Activated CD4-positive, alpha-beta T cell treated with anti-CD3 and anti-CD28 coated beads for 36 hours (primary cell): ENCODE measurements at regions of chr11 and their contacts with region 1.

Region 1: GRCh38 chr11:131748151-131749050 is 378.0 kb downstream of the NTM start:
- DNase-seq: peak; percentile 67
- ATAC-seq: no peak
- H3K4me3 Mint-ChIP-seq: no peak overlapping the region
- H3K27ac Mint-ChIP-seq: no peak overlapping the region
- H3K4me1 Mint-ChIP-seq: no peaks in the 10 kb centered on the region
- H3K27me3 Mint-ChIP-seq: peaks cover 10% of the 10 kb centered on the region

Region 2: DNA sequence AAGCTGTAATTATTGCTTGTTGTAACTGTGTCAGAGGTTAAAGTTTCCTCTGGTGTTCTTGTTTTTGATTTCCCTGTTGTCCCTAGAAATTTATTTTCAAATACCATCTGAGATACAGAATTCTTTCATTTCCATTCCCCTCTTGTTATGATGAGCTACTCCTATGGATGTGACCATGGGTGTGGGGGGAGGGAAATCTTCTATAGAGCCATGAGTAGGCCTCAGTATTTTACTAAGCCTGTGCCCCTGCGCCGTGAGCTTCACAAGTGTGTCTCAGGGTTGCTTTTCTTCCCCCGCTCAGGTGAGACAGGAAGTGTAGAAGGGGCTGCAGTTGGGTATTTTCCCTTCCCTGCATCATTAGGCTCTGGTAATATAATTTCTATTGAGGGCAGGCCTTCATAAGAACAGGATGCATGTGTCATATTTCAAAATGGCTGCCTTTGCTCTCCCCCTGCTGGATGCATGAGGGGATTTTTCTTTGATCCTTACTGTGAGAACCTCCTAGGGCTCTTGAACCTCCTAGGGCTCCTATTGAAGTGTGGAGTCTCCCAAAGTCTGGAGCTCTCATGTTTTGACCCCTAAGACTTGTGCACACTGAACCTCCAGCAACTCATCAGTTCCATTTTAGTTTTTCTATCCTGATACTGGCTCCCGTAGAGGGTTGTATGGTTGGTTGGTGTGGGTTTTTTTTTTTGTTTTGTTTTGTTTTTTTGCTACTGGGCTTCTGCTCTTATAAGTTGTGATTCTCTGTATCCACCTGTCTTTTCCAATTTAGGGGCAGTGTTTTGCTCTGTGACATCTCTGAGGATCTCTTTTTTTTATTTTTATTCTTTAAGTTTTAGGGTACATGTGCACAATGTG is 280.2 kb after region 1 on chr11:
- CTCF ChIA-PET with region 1: no interaction called
- POLR2A ChIA-PET with region 1: no interaction called
- intact Hi-C with region 1: loop called (anchors 1 to 5 kb)
- DNase-seq: peak; percentile 26
- ATAC-seq: no peak
- H3K4me3 Mint-ChIP-seq: no peak overlapping the region
- H3K27ac Mint-ChIP-seq: no peak overlapping the region
- H3K4me1 Mint-ChIP-seq: no peaks in the 10 kb centered on the region
- H3K27me3 Mint-ChIP-seq: no peaks in the 10 kb centered on the region

Region 3: DNA sequence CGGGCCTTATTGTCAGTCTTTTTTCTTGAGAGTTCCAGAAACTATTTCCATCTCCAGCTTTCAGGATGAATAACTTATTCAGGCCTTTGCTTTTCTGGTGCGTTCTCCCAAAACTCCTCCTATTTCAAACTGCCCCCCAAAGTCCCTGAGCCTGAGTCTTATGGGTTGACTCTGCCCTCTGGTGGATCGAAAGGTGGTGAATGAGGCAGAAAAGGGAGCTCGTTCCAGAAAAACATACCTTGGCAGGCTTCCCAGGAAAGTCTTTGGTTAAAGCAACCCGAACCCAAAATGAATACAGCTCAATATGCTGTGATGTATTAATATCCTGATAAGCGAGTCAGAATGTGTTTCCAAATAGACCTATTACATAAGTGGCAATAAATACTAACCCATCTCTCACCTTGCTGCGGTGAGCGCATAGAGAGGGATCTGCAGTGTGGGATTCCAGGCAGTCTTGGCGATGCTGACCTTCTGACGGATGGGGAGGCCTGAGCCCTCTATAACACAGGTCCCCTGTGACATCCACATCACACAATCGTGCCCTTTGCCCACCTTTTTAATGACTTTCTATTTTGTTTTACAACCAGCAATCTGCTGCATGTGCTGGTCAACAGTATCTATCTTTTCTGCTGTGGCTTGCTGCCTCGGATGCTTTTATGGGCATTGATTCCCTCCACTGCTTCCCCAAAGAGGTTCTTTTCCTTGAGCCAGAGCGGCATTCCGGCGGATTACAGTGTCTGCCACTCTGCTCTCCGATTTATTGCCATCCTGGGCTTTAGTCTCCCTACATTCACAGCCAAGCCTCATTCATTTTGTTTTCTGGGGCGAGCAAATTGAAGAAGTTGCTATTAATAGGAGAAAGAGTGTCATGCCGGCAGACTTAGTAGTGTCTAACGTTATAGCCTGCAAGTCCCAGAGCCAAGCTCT is 378.8 kb after region 1 on chr11:
- CTCF ChIA-PET with region 1: interaction called, 5 read pairs
- POLR2A ChIA-PET with region 1: no interaction called
- intact Hi-C with region 1: loop called in 1 of 2 experiments (anchors 2 kb)
- DNase-seq: no peak
- ATAC-seq: no peak
- H3K4me3 Mint-ChIP-seq: no peak overlapping the region
- H3K27ac Mint-ChIP-seq: no peak overlapping the region
- H3K4me1 Mint-ChIP-seq: no peaks in the 10 kb centered on the region
- H3K27me3 Mint-ChIP-seq: peaks cover 2% of the 10 kb centered on the region

Region 4: DNA sequence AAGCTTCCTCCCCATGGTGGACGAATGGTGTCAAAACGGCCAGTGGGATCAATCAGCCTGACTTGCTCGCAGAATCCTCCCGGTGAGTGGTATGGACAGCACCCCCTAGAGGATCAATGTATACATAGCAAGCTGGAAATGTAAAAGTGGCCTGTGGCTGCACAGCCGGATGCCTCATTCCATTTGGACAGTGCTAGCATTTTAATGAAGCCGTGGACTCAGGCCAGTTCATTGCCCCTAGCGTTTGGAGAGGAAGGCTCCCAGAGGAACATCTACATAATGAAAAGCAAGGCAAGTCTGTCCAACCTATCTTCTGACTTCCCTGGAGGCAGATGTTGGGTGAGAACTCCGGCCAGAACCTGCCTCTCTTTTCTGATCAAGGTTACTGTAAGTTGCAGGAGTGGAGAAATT is 564.3 kb after region 1 on chr11:
- CTCF ChIA-PET with region 1: no interaction called
- POLR2A ChIA-PET with region 1: no interaction called
- intact Hi-C with region 1: loop called in 1 of 2 experiments (anchors 1 kb)
- DNase-seq: peak; percentile 9
- ATAC-seq: no peak
- H3K4me3 Mint-ChIP-seq: no peak overlapping the region
- H3K27ac Mint-ChIP-seq: no peak overlapping the region
- H3K4me1 Mint-ChIP-seq: no peaks in the 10 kb centered on the region
- H3K27me3 Mint-ChIP-seq: peaks cover 2% of the 10 kb centered on the region

Region 5: DNA sequence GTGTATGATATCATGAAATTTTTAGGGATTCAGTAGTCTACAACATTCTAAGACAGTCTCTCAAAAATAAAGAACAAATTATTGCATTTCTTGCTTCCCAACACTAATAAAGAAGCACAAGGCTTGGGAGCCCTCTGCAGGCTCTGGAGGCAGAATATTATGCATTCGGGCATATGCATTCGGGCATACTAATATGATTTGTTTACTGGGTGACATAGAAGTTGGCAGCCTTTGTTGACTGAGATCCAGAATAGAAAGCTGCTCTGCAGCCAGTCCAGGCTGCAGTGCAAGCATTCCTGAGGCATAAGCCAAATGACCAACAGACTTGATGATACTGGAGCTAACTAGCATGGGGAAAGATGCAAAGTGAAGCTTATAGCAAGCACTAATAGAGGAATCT is 838.4 kb after region 1 on chr11:
- CTCF ChIA-PET with region 1: no interaction called
- POLR2A ChIA-PET with region 1: no interaction called
- intact Hi-C with region 1: no loop called
- DNase-seq: no peak
- ATAC-seq: no peak
- H3K4me3 Mint-ChIP-seq: no peak overlapping the region
- H3K27ac Mint-ChIP-seq: no peak overlapping the region
- H3K4me1 Mint-ChIP-seq: no peaks in the 10 kb centered on the region
- H3K27me3 Mint-ChIP-seq: peaks cover 6% of the 10 kb centered on the region

Region 6: GRCh38 chr11:132941024-132941646 is 1192.7 kb after region 1 on chr11:
- CTCF ChIA-PET with region 1: interaction called, 4 read pairs
- POLR2A ChIA-PET with region 1: no interaction called
- intact Hi-C with region 1: loop called in 1 of 2 experiments (anchors 1 kb)
- DNase-seq: peak; percentile 21
- ATAC-seq: no peak
- H3K4me3 Mint-ChIP-seq: no peak overlapping the region
- H3K27ac Mint-ChIP-seq: no peak overlapping the region
- H3K4me1 Mint-ChIP-seq: peaks cover 2% of the 10 kb centered on the region
- H3K27me3 Mint-ChIP-seq: peaks cover 23% of the 10 kb centered on the region